Endothelial cell of umbilical vein (primary cell): ENCODE measurements at regions of chr12 and their contacts with region 1.

Region 1: GRCh38 chr12:132327351-132328171 is 1.8 kb downstream of the GALNT9 start:
- DNase-seq: peak; percentile 45
- H3K4me3 ChIP-seq: no peak overlapping the region
- H3K27ac ChIP-seq: no peak overlapping the region
- H3K4me1 ChIP-seq: no peaks in the 10 kb centered on the region
- H3K27me3 ChIP-seq: peaks cover 0 to 2% of the 10 kb centered on the region in 2 experiments
- CTCF ChIP-seq: no peak
- POLR2A ChIP-seq: no peak

Region 2: DNA sequence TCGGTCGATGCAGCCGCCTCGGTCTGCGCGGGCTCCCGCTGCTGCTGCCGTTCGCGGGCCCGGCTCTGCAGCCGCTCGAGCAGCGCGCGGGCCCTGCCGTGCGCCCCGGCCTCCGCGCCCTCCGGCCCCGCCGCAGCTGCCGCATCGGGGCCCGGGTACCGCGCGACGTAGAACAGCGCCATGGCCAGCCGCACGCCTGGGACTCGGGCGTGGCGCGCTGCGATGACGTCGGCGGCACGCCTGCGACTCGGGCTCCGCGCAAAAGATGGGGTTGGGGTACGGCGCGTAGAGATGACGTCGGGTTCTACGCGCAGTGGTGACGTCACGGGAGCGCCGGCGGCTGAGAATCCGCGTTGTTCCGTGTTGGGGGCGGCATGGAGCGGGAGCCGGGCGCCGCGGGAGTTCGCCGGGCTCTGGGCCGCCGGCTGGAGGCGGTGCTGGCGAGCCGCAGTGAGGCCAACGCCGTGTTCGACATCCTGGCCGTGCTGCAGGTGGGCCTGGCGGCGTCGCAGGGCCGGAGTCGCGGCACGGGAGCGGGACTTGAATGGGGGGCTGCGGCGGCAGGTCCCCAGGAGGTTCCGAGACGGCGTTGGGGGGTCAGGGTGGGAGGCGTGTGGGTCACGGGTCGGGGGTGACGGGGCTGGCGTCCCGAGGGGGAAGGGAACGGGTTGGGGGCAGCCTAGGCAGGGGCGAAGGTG is 183.3 kb before region 1 on chr12 and contains the starts of genes DDX51 and NOC4L:
- CTCF ChIA-PET with region 1: no interaction called
- POLR2A ChIA-PET with region 1: no interaction called
- dilution Hi-C with region 1: no loop called
- intact Hi-C with region 1: no loop called
- DNase-seq: peak; percentile 97
- H3K4me3 ChIP-seq: peak within 1 kb of the TSS; percentile 54 to 77 (median 55)
- H3K27ac ChIP-seq: peak within 1 kb of the TSS; percentile 30
- H3K4me1 ChIP-seq: peaks cover 14% of the 10 kb centered on the region
- H3K27me3 ChIP-seq: no peaks in the 10 kb centered on the region
- CTCF ChIP-seq: no peak
- POLR2A ChIP-seq: peak; percentile 62
- total RNA-seq, gene DDX51: 23.5 and 27.2 TPM in 2 replicates
- total RNA-seq, gene NOC4L: 28.0 and 29.4 TPM in 2 replicates

Region 3: GRCh38 chr12:132275110-132275531 is 52.4 kb before region 1 on chr12:
- CTCF ChIA-PET with region 1: no interaction called
- POLR2A ChIA-PET with region 1: no interaction called
- dilution Hi-C with region 1: no loop called
- intact Hi-C with region 1: no loop called
- DNase-seq: peak; percentile 31
- H3K4me3 ChIP-seq: no peak overlapping the region
- H3K27ac ChIP-seq: no peak overlapping the region
- H3K4me1 ChIP-seq: no peaks in the 10 kb centered on the region
- H3K27me3 ChIP-seq: no peaks in the 10 kb centered on the region
- CTCF ChIP-seq: no peak
- POLR2A ChIP-seq: no peak

Region 4: GRCh38 chr12:132351751-132352495 is 24.4 kb after region 1 on chr12:
- CTCF ChIA-PET with region 1: no interaction called
- POLR2A ChIA-PET with region 1: interaction called, 11 read pairs
- dilution Hi-C with region 1: no loop called
- intact Hi-C with region 1: no loop called
- DNase-seq: no peak
- H3K4me3 ChIP-seq: no peak overlapping the region
- H3K27ac ChIP-seq: no peak overlapping the region
- H3K4me1 ChIP-seq: no peaks in the 10 kb centered on the region
- H3K27me3 ChIP-seq: no peaks in the 10 kb centered on the region
- CTCF ChIP-seq: no peak
- POLR2A ChIP-seq: no peak

Region 5: DNA sequence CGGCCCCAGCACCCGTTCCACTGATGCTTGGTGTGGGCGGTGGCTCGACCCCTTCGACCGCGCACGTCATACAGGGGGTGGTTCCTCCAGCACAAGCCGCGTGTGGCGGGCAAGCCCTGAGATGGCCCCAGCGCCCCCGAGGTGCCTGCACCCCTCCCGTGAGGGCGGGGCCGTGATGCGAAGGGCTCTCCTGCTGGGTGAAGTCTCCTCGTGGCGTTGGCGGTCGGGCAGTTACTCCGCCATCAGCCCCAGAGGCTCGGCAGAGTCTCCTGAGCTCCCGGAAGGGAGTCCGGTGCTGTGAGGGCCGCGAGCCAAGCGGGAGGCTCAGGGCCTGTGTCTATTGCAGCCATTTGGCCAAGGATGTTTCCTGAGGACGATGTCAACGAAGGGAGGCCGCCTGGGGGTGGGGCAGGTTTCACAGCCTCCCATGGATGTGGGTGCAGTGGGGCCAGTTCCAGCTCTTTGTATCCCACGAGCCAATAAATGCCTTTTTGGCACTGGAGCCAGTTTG is 79.9 kb after region 1 on chr12:
- CTCF ChIA-PET with region 1: no interaction called
- POLR2A ChIA-PET with region 1: no interaction called
- dilution Hi-C with region 1: no loop called
- intact Hi-C with region 1: no loop called
- DNase-seq: no peak
- H3K4me3 ChIP-seq: no peak overlapping the region
- H3K27ac ChIP-seq: no peak overlapping the region
- H3K4me1 ChIP-seq: no peaks in the 10 kb centered on the region
- H3K27me3 ChIP-seq: no peaks in the 10 kb centered on the region
- CTCF ChIP-seq: no peak
- POLR2A ChIP-seq: no peak